Activated naive CD4-positive, alpha-beta T cell treated with anti-CD3 and anti-CD28 coated beads for 36 hours (primary cell): ENCODE measurements at regions of chr1 and their contacts with region 1.

Region 1: GRCh38 chr1:99707535-99708142 is 58.8 kb downstream of the FRRS1 start:
- DNase-seq: peak; percentile 81
- H3K4me3 Mint-ChIP-seq: no peak overlapping the region
- H3K27ac Mint-ChIP-seq: no peak overlapping the region
- H3K4me1 Mint-ChIP-seq: peaks cover 2% of the 10 kb centered on the region
- H3K27me3 Mint-ChIP-seq: peaks cover 2% of the 10 kb centered on the region

Region 2: GRCh38 chr1:99481391-99481996 is 226.1 kb before region 1 on chr1:
- CTCF ChIA-PET with region 1: interaction called, 3 read pairs
- intact Hi-C with region 1: loop called (anchors 1 kb)
- DNase-seq: peak; percentile 57
- H3K4me3 Mint-ChIP-seq: no peak overlapping the region
- H3K27ac Mint-ChIP-seq: no peak overlapping the region
- H3K4me1 Mint-ChIP-seq: no peaks in the 10 kb centered on the region
- H3K27me3 Mint-ChIP-seq: peaks cover 21% of the 10 kb centered on the region

Region 3: DNA sequence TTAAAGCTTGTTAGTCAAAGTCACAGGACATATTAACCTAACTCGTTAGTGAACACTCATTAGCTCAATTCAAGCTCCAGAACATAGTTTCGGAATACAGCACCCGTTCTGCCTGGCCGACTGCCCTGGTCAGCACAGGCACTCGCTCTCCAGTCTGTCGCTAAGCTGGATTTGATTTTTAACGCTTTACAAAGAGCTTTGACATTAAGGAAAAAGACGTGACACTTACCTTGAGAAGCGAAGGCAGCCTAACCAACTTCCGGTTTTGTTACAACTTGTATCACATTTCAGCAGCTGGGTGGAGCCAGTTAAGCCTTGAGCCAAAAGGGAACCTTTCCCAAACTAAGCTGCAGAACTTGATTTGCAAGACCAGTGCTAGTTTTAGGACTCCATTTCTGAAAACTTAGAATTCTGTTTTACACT is 58.8 kb after region 1 on chr1 and contains the start of gene FRRS1:
- CTCF ChIA-PET with region 1: no interaction called
- intact Hi-C with region 1: no loop called
- DNase-seq: peak; percentile 65
- H3K4me3 Mint-ChIP-seq: peak within 1 kb of the TSS; percentile 85
- H3K27ac Mint-ChIP-seq: no peak within 1 kb of the TSS
- H3K4me1 Mint-ChIP-seq: peaks cover 4% of the 10 kb centered on the region
- H3K27me3 Mint-ChIP-seq: peaks cover 5% of the 10 kb centered on the region
- total RNA-seq, gene FRRS1: 0.32 to 0.52 TPM